Activated naive CD4-positive, alpha-beta T cell treated with anti-CD3 and anti-CD28 coated beads, Interleukin-2, amount 10 ng/mL, durations not matched to agents 7 days and 5 days (primary cell): ENCODE measurements at regions of chr5 and their contacts with region 1.

Region 1: DNA sequence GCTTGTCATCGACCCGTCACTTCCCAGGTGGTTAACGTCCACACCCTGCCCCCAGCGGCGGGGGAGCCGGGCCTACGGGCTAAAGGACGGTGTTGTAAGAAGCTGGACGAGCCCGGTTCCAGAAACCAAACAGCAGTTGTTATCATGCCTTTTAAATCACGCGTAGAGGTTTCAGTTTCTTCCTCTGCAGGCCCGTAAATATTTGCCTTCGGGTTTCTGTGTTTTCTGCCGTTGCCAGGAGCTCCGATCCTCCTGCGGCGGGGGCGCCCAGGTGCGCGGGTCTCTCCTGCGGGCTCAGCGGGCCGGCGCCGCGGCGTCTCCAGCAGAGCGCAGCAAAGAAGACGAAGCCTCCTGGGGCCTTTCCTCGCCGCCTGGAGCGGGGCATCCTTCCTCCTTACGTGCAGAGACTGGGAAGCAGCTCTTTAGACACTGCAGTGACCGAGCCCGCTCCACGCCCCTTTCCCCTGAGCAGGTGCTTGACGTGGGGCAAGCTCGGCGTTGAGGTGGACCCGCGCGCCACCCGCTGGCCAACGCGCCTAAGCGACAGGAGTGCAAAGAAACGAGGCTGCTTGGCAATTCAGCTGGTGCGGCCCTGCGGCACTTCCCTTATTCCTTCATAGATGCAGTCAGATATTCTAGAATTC is 21.8 kb upstream of the TTC1 start:
- DNase-seq: peak; percentile 84
- H3K4me3 Mint-ChIP-seq: peak overlapping the region; percentile 53
- H3K27ac Mint-ChIP-seq: no peak overlapping the region
- H3K4me1 Mint-ChIP-seq: peaks cover 6% of the 10 kb centered on the region
- H3K27me3 Mint-ChIP-seq: peaks cover 74% of the 10 kb centered on the region

Region 2: GRCh38 chr5:159444441-159445082 is 542.6 kb before region 1 on chr5:
- CTCF ChIA-PET with region 1: interaction called, 17 read pairs
- DNase-seq: no peak
- H3K4me3 Mint-ChIP-seq: no peak overlapping the region
- H3K27ac Mint-ChIP-seq: no peak overlapping the region
- H3K4me1 Mint-ChIP-seq: peaks cover 7% of the 10 kb centered on the region
- H3K27me3 Mint-ChIP-seq: peaks cover 60% of the 10 kb centered on the region

Region 3: DNA sequence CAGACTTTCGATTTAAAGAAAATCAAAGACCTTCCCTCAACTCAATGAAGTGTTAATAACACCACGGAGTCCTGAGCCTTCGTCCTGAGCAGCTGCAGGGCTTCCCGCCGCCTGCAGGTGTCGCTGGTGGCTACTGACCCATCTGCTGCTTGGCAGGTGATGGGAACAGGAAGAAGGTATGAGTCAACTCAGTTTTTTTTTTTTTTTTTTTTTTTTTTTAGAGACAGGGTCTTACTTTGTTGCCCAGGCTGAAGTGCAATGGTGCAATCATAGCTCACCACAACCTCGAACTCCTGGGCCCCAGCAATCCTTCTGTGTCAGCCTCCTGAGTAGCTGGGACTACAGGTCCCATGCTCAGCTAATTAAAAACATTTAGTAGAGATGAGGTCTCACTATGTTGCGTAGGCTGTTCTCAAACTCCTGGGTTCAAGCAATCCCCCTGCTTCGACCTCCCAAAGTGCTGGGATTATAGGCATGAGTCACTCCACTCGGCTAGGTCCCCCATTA is 471.2 kb before region 1 on chr5:
- CTCF ChIA-PET with region 1: interaction called, 24 read pairs
- DNase-seq: peak; percentile 78
- H3K4me3 Mint-ChIP-seq: no peak overlapping the region
- H3K27ac Mint-ChIP-seq: no peak overlapping the region
- H3K4me1 Mint-ChIP-seq: peaks cover 8% of the 10 kb centered on the region
- H3K27me3 Mint-ChIP-seq: peaks cover 33% of the 10 kb centered on the region

Region 4: GRCh38 chr5:160001457-160001856 is 14.3 kb after region 1 on chr5:
- CTCF ChIA-PET with region 1: interaction called, 10 read pairs
- DNase-seq: no peak
- H3K4me3 Mint-ChIP-seq: no peak overlapping the region
- H3K27ac Mint-ChIP-seq: no peak overlapping the region
- H3K4me1 Mint-ChIP-seq: no peaks in the 10 kb centered on the region
- H3K27me3 Mint-ChIP-seq: peaks cover 32% of the 10 kb centered on the region